ENCODE measurements at regions of chr11 and their contacts with region 1.

Region 1: GRCh38 chr11:116879800-116880625 is 42.6 kb upstream of the APOA1 start:
- DNase-seq: peak in 1 of 2 donors; percentile 78
- ATAC-seq: peak; percentile 82 to 85 (median 83)
- H3K4me3 ChIP-seq: no peak overlapping the region
- H3K4me3 Mint-ChIP-seq: no peak overlapping the region
- H3K27ac ChIP-seq: no peak overlapping the region
- H3K27ac Mint-ChIP-seq: peak overlapping the region; percentile 4 to 62
- H3K4me1 ChIP-seq: no peaks in the 10 kb centered on the region
- H3K4me1 Mint-ChIP-seq: peaks cover 7% of the 10 kb centered on the region in 2 donors
- H3K27me3 ChIP-seq: no peaks in the 10 kb centered on the region
- H3K27me3 Mint-ChIP-seq: no peaks in the 10 kb centered on the region
- CTCF ChIP-seq: peak; percentile 68

Region 2: GRCh38 chr11:117107701-117108590 is 227.9 kb after region 1 on chr11:
- intact Hi-C with region 1: loop called (anchors 1 kb)
- DNase-seq: no peak
- ATAC-seq: no peak
- H3K4me3 ChIP-seq: no peak overlapping the region
- H3K4me3 Mint-ChIP-seq: no peak overlapping the region
- H3K27ac ChIP-seq: no peak overlapping the region
- H3K27ac Mint-ChIP-seq: no peak overlapping the region
- H3K4me1 ChIP-seq: no peaks in the 10 kb centered on the region
- H3K4me1 Mint-ChIP-seq: no peaks in the 10 kb centered on the region
- H3K27me3 ChIP-seq: peaks cover 2% of the 10 kb centered on the region
- H3K27me3 Mint-ChIP-seq: no peaks in the 10 kb centered on the region
- CTCF ChIP-seq: no peak

Region 3: GRCh38 chr11:117226388-117227385 is 346.7 kb after region 1 on chr11:
- intact Hi-C with region 1: loop called (anchors 10 kb)
- DNase-seq: peak in 1 of 2 donors; percentile 88
- ATAC-seq: peak; percentile 68 to 79 (median 68)
- H3K4me3 ChIP-seq: no peak overlapping the region
- H3K4me3 Mint-ChIP-seq: peak overlapping the region; percentile 4
- H3K27ac ChIP-seq: no peak overlapping the region
- H3K27ac Mint-ChIP-seq: peak overlapping the region; percentile 64 to 75
- H3K4me1 ChIP-seq: peaks cover 33% of the 10 kb centered on the region
- H3K4me1 Mint-ChIP-seq: peaks cover 35 to 52% of the 10 kb centered on the region in 2 donors
- H3K27me3 ChIP-seq: no peaks in the 10 kb centered on the region
- H3K27me3 Mint-ChIP-seq: no peaks in the 10 kb centered on the region
- CTCF ChIP-seq: peak; percentile 73

Measured in natural killer cell (primary cell).